ENCODE measurements at regions of chr6 and their contacts with region 1.

Region 1: GRCh38 chr6:32413427-32414047 is 6.6 kb upstream of the BTNL2 start:
- DNase-seq: peak; percentile 76 to 91 (median 83)
- ATAC-seq: peak; percentile 87
- H3K4me3 ChIP-seq: no peak overlapping the region
- H3K4me3 Mint-ChIP-seq: no peak overlapping the region
- H3K27ac ChIP-seq: no peak overlapping the region
- H3K27ac Mint-ChIP-seq: no peak overlapping the region
- H3K4me1 ChIP-seq: peaks cover 5% of the 10 kb centered on the region
- H3K4me1 Mint-ChIP-seq: peaks cover 11% of the 10 kb centered on the region
- H3K27me3 ChIP-seq: peaks cover 8 to 17% of the 10 kb centered on the region in 2 experiments
- H3K27me3 Mint-ChIP-seq: peaks cover 56% of the 10 kb centered on the region
- CTCF ChIP-seq: peak; percentile 97

Region 2: DNA sequence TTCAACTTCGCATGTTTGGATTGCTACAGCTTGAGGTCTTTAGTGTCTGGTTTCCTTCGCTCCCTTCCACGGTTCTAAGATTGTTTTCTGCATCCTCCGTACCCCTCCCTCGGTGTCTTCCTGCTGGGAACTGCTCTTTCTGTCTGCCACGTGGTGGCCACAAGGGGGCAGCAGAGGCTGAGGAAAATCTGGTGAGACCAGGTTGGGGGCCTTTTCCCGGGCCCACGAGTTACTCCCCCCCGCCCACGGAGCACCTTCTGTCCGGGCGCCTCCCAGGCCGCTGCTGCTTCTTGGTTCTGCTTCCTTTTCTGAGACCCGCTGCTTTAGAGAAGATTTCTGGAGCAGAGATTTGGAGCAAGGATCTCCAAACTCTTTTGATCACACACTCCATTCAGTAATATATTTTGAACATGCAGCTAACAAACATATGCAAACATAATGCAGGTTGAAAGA is 168.6 kb before region 1 on chr6:
- CTCF ChIA-PET with region 1: no interaction called
- POLR2A ChIA-PET with region 1: no interaction called
- intact Hi-C with region 1: loop called in 1 of 2 experiments (anchors 2 kb)
- DNase-seq: peak; percentile 50 to 85 (median 66)
- ATAC-seq: peak; percentile 84
- H3K4me3 ChIP-seq: no peak overlapping the region
- H3K4me3 Mint-ChIP-seq: no peak overlapping the region
- H3K27ac ChIP-seq: no peak overlapping the region
- H3K27ac Mint-ChIP-seq: no peak overlapping the region
- H3K4me1 ChIP-seq: peaks cover 7% of the 10 kb centered on the region
- H3K4me1 Mint-ChIP-seq: peaks cover 6% of the 10 kb centered on the region
- H3K27me3 ChIP-seq: no peaks in the 10 kb centered on the region
- H3K27me3 Mint-ChIP-seq: no peaks in the 10 kb centered on the region
- CTCF ChIP-seq: peak; percentile 97

Region 3: GRCh38 chr6:32622545-32623401 is 209.2 kb after region 1 on chr6:
- CTCF ChIA-PET with region 1: no interaction called
- POLR2A ChIA-PET with region 1: no interaction called
- intact Hi-C with region 1: loop called in 1 of 2 experiments (anchors 5 kb)
- DNase-seq: peak in 11 of 14 experiments; percentile 8 to 94 (median 24)
- ATAC-seq: peak; percentile 77
- H3K4me3 ChIP-seq: no peak overlapping the region
- H3K4me3 Mint-ChIP-seq: peak overlapping the region; percentile 13
- H3K27ac ChIP-seq: peak overlapping the region; percentile 49 to 73
- H3K27ac Mint-ChIP-seq: peak overlapping the region; percentile 91
- H3K4me1 ChIP-seq: peaks cover 23% of the 10 kb centered on the region
- H3K4me1 Mint-ChIP-seq: peaks cover 57% of the 10 kb centered on the region
- H3K27me3 ChIP-seq: no peaks in the 10 kb centered on the region
- H3K27me3 Mint-ChIP-seq: no peaks in the 10 kb centered on the region
- CTCF ChIP-seq: peak; percentile 45

Region 4: GRCh38 chr6:32692019-32692418 is 278.5 kb after region 1 on chr6:
- CTCF ChIA-PET with region 1: interaction called, 4 read pairs
- POLR2A ChIA-PET with region 1: interaction called, 3 read pairs
- intact Hi-C with region 1: loop called in 1 of 2 experiments (anchors 1 kb)
- DNase-seq: peak in 13 of 14 experiments; percentile 32 to 80 (median 48)
- ATAC-seq: peak; percentile 94
- H3K4me3 ChIP-seq: no peak overlapping the region
- H3K4me3 Mint-ChIP-seq: no peak overlapping the region
- H3K27ac ChIP-seq: no peak overlapping the region
- H3K27ac Mint-ChIP-seq: no peak overlapping the region
- H3K4me1 ChIP-seq: no peaks in the 10 kb centered on the region
- H3K4me1 Mint-ChIP-seq: peaks cover 20% of the 10 kb centered on the region
- H3K27me3 ChIP-seq: no peaks in the 10 kb centered on the region
- H3K27me3 Mint-ChIP-seq: peaks cover 43% of the 10 kb centered on the region
- CTCF ChIP-seq: peak; percentile 84

Region 5: DNA sequence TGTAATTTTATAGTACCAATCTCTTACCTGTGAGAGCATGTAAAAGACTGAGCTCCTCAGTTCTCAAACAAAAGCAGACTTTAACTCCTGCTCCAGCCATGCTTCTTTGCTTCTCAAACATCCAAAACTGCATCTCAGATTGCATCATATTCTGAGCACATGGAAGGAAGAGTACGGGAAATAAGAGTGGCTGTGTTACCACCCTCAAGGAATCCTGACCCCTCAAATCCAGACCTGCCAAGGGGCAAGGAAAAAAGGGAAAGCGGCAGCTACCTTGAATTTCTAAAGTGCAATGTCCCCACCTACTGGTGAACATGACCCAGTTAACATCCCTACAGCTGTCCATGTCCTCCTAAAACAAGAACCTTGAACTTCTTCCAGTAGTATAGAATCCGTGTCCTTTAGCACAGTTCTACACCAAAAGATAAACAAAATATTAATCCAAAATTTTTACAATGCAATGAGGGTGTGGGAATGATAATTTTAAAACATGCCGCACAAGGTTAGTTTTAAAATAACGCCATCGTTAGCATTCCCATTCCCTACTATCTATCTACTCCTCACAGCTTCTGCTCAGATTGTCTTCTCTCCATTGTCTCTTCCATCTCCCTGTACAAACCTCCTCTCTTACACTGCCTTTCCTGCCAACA is 287.0 kb after region 1 on chr6:
- CTCF ChIA-PET with region 1: interaction called, 9 read pairs
- POLR2A ChIA-PET with region 1: interaction called, 4 read pairs
- intact Hi-C with region 1: loop called (anchors 1 kb)
- DNase-seq: peak in 10 of 14 experiments; percentile 0 to 73 (median 10)
- ATAC-seq: peak; percentile 41
- H3K4me3 ChIP-seq: no peak overlapping the region
- H3K4me3 Mint-ChIP-seq: no peak overlapping the region
- H3K27ac ChIP-seq: no peak overlapping the region
- H3K27ac Mint-ChIP-seq: no peak overlapping the region
- H3K4me1 ChIP-seq: peaks cover 3% of the 10 kb centered on the region
- H3K4me1 Mint-ChIP-seq: no peaks in the 10 kb centered on the region
- H3K27me3 ChIP-seq: peaks cover 4 to 12% of the 10 kb centered on the region in 2 experiments
- H3K27me3 Mint-ChIP-seq: peaks cover 50% of the 10 kb centered on the region
- CTCF ChIP-seq: peak; percentile 93

Region 6: DNA sequence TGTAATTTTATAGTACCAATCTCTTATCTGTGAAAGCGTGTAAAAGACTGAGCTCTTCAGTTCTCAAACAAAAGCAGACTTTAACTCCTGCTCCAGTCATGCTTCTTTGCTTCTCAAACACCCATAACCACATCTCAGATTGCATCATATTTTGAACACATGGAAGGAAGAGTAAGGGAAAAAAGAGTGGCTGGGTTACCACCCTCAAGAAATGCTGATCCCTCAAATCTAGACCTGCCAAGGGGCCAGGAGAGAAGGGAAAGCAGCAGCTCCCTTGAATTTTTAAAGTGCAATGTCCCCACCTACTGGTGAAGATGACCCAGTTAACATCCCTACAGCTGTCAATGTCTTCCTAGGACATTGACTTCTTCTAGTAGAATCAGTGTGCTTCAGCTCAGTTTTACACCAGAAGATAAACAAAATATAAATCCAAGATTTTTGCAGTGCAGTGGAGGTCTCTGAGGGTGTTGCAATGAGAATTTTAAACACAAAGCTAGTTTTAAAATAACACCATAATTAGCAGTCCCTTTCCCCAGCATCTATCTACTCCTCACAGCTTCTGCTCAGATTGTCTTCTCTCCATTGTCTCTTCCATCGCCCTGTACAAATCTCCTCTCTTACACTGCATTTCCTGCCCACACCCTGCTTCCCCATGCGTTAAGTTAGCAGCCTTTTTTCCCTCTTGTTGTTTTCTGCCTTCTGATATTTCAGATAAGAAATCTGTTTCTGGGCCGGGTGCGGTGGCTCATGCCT is 372.4 kb after region 1 on chr6:
- CTCF ChIA-PET with region 1: interaction called, 10 read pairs
- POLR2A ChIA-PET with region 1: interaction called, 3 read pairs
- intact Hi-C with region 1: loop called (anchors 1 to 2 kb)
- DNase-seq: peak in 5 of 14 experiments; percentile 11 to 69 (median 57)
- ATAC-seq: peak; percentile 57
- H3K4me3 ChIP-seq: no peak overlapping the region
- H3K4me3 Mint-ChIP-seq: no peak overlapping the region
- H3K27ac ChIP-seq: no peak overlapping the region
- H3K27ac Mint-ChIP-seq: no peak overlapping the region
- H3K4me1 ChIP-seq: no peaks in the 10 kb centered on the region
- H3K4me1 Mint-ChIP-seq: no peaks in the 10 kb centered on the region
- H3K27me3 ChIP-seq: peaks cover 0 to 16% of the 10 kb centered on the region in 2 experiments
- H3K27me3 Mint-ChIP-seq: peaks cover 62% of the 10 kb centered on the region
- CTCF ChIP-seq: peak; percentile 65

Region 7: GRCh38 chr6:32796848-32797776 is 383.6 kb after region 1 on chr6:
- CTCF ChIA-PET with region 1: interaction called, 4 read pairs
- POLR2A ChIA-PET with region 1: no interaction called
- intact Hi-C with region 1: loop called (anchors 1 kb)
- DNase-seq: peak; percentile 57 to 88 (median 76)
- ATAC-seq: peak; percentile 73
- H3K4me3 ChIP-seq: peak overlapping the region; percentile 14
- H3K4me3 Mint-ChIP-seq: peak overlapping the region; percentile 40
- H3K27ac ChIP-seq: no peak overlapping the region
- H3K27ac Mint-ChIP-seq: no peak overlapping the region
- H3K4me1 ChIP-seq: peaks cover 9% of the 10 kb centered on the region
- H3K4me1 Mint-ChIP-seq: peaks cover 26% of the 10 kb centered on the region
- H3K27me3 ChIP-seq: peaks cover 14 to 21% of the 10 kb centered on the region in 2 experiments
- H3K27me3 Mint-ChIP-seq: peaks cover 65% of the 10 kb centered on the region
- CTCF ChIP-seq: peak; percentile 97